PC-3 (cell line): ENCODE measurements at regions of chr4 and their contacts with region 1.

Region 1: GRCh38 chr4:52837726-52838558 is 24.2 kb upstream of the RASL11B start:
- DNase-seq: peak; percentile 87
- ATAC-seq: peak; percentile 83
- H3K4me3 ChIP-seq: peak overlapping the region; percentile 18; the same call in 1 of the 2 replicates
- H3K27ac ChIP-seq: no peak overlapping the region; the same call in 1 of the 2 replicates
- H3K4me1 ChIP-seq: peaks cover 23% of the 10 kb centered on the region
- H3K27me3 ChIP-seq: no peaks in the 10 kb centered on the region
- CTCF ChIP-seq: no peak

Region 2: GRCh38 chr4:52250154-52250553 is 587.8 kb before region 1 on chr4:
- CTCF ChIA-PET with region 1: no interaction called
- POLR2A ChIA-PET with region 1: no interaction called
- intact Hi-C with region 1: no loop called
- DNase-seq: no peak
- ATAC-seq: no peak
- H3K4me3 ChIP-seq: no peak overlapping the region
- H3K27ac ChIP-seq: no peak overlapping the region
- H3K4me1 ChIP-seq: peaks cover 15% of the 10 kb centered on the region
- H3K27me3 ChIP-seq: no peaks in the 10 kb centered on the region
- CTCF ChIP-seq: no peak

Region 3: DNA sequence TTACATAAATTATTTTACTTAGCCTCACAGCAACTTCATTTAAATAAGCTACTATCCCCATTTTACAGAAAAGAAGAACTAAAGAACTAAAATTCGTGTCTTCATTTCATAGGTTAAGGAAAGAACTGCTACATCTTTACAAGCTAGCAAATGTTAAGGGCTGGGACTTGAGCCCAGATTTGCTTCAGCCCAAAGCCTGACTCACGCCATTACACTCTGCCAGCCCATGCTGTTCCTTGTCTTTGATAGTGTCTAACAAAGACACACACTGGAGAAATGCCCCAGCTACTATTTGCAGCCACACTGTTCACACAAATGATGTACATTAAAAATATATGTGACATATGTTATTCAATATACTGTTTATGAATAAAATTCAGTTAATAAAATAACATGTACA is 57.7 kb before region 1 on chr4:
- CTCF ChIA-PET with region 1: no interaction called
- POLR2A ChIA-PET with region 1: no interaction called
- intact Hi-C with region 1: loop called (anchors 10 kb)
- DNase-seq: peak; percentile 52
- ATAC-seq: peak; percentile 93
- H3K4me3 ChIP-seq: no peak overlapping the region
- H3K27ac ChIP-seq: no peak overlapping the region
- H3K4me1 ChIP-seq: no peaks in the 10 kb centered on the region
- H3K27me3 ChIP-seq: 0 out of 2 replicates have a peak, but pooled peaks cover 4% of the 10 kb centered on the region
- CTCF ChIP-seq: no peak